SK-N-SH (cell line): ENCODE measurements at regions of chr15 and their contacts with region 1.

Region 1: DNA sequence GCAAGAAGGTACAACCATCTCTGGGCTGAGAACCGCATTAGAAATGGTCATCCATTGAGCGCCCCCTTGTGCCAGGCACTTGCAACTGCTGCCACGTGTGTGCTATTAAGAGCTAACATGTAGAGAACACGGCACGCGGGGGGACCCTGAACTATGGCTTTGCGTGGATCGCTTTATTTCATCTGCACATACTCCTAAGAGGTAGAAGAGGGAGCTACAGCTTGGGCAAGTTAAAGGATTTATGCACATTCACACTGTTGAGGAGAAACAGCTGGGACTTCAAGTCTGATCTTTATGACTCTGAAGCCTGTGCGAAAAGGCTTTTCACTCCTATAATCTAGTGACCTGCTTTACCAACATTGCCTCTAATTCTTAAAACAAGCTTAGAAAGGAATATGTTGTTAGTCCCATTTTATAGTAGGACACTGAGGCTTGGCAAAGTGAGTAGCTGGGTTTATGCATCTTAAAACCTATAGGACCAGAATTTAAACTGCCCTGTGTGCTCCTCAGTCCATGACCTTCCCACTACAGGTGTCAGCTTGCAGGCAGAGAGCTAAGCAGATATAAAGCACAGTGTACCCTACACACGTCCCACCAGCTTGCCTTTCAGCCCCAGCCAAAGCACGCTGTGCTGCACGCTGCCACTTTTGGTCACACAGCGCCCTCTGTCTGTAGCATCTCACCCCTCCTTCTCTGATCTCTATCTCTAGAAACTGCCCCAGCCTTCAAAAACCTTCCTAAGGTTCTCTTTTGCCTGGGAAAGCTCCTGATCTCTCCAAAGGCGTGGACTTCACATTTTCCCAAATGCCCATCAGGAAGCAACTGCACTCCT is 57.8 kb downstream of the STARD5 start:
- DNase-seq: peak; percentile 82
- H3K4me3 ChIP-seq: peak overlapping the region; percentile 9 to 51; a peak in 2 of 4 replicates
- H3K27ac ChIP-seq: no peak overlapping the region
- H3K4me1 ChIP-seq: peaks cover 5 to 11% of the 10 kb centered on the region in 2 experiments; a peak in 2 of 4 replicates
- H3K27me3 ChIP-seq: peaks cover 10% of the 10 kb centered on the region; the same call in 1 of the 2 replicates
- CTCF ChIP-seq: peak; percentile 84
- EP300 ChIP-seq: no peak
- RAD21 ChIP-seq: peak; percentile 95

Region 2: GRCh38 chr15:80523746-80524145 is 742.4 kb before region 1 on chr15:
- CTCF ChIA-PET with region 1: no interaction called
- POLR2A ChIA-PET with region 1: no interaction called
- DNase-seq: no peak
- H3K4me3 ChIP-seq: no peak overlapping the region
- H3K27ac ChIP-seq: no peak overlapping the region
- H3K4me1 ChIP-seq: no peaks in the 10 kb centered on the region
- H3K27me3 ChIP-seq: no peaks in the 10 kb centered on the region
- CTCF ChIP-seq: no peak
- EP300 ChIP-seq: no peak
- RAD21 ChIP-seq: no peak

Region 3: DNA sequence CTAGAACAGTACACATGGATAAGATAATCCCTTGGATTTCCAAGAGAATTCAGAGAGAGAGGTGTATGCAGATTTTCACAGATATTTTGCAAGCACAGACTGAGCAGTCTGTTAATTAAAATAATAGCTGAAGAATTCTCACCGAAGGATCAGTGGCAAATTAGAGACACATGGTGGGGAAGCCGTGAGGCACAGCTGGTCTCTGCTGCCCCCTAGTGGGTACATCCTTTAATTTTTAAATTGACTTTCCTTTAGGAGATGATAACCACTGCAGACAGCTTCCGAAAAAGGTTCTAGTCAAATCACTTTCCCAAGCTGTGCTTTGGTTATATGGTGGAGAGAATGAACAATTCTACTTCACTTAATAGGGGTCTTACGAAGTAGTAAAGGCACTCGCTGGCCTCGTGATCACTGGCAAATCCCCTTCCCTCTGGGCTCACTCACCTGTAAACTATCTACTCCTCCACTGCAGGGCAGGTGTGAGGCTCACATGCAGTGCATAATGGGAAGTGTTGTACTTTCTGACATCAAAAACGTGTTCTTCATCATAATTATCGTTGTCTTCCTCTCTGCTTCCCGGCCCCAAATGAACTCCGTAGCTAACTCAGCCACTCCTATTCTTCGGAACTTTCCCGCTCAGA is 296.0 kb before region 1 on chr15:
- CTCF ChIA-PET with region 1: interaction called, 14 read pairs
- POLR2A ChIA-PET with region 1: no interaction called
- DNase-seq: peak; percentile 70
- H3K4me3 ChIP-seq: no peak overlapping the region; a peak in 1 of 4 replicates
- H3K27ac ChIP-seq: no peak overlapping the region
- H3K4me1 ChIP-seq: peaks cover 0 to 7% of the 10 kb centered on the region in 2 experiments; a peak in 1 of 4 replicates
- H3K27me3 ChIP-seq: no peaks in the 10 kb centered on the region
- CTCF ChIP-seq: peak; percentile 87
- EP300 ChIP-seq: no peak
- RAD21 ChIP-seq: peak; percentile 95

Region 4: GRCh38 chr15:81126892-81127291 is 139.3 kb before region 1 on chr15:
- CTCF ChIA-PET with region 1: interaction called, 49 read pairs
- POLR2A ChIA-PET with region 1: no interaction called
- DNase-seq: no peak
- H3K4me3 ChIP-seq: no peak overlapping the region
- H3K27ac ChIP-seq: peak overlapping the region in 1 of 2 experiments; percentile 7; a peak in 1 of 4 replicates
- H3K4me1 ChIP-seq: no peaks in the 10 kb centered on the region
- H3K27me3 ChIP-seq: no peaks in the 10 kb centered on the region; the same call in 1 of the 2 replicates
- CTCF ChIP-seq: no peak
- EP300 ChIP-seq: no peak
- RAD21 ChIP-seq: no peak

Region 5: GRCh38 chr15:81170511-81170910 is 95.6 kb before region 1 on chr15:
- CTCF ChIA-PET with region 1: interaction called, 23 read pairs
- POLR2A ChIA-PET with region 1: no interaction called
- DNase-seq: no peak
- H3K4me3 ChIP-seq: no peak overlapping the region
- H3K27ac ChIP-seq: no peak overlapping the region
- H3K4me1 ChIP-seq: no peaks in the 10 kb centered on the region
- H3K27me3 ChIP-seq: no peaks in the 10 kb centered on the region
- CTCF ChIP-seq: no peak
- EP300 ChIP-seq: no peak
- RAD21 ChIP-seq: no peak

Region 6: DNA sequence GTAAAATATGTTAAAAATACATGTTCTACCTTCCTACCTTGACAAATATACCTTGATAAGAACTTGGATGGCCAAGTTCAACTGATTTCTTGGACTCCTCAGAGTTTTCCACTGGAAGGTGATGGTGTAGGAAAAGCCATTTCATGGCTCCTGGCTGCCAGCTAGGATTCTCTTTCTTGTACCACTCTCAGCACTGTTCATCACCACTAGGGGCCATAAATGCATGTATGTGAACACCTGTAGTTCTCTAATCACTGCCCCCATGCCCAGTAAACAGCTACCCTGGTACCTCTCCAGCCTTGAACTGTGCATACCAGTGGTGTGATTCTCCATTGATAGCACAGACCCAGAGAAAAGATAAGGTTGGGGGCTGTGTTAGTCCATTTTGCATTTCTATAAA is 31.3 kb before region 1 on chr15:
- CTCF ChIA-PET with region 1: interaction called, 12 read pairs
- POLR2A ChIA-PET with region 1: no interaction called
- DNase-seq: no peak
- H3K4me3 ChIP-seq: no peak overlapping the region
- H3K27ac ChIP-seq: no peak overlapping the region
- H3K4me1 ChIP-seq: no peaks in the 10 kb centered on the region
- H3K27me3 ChIP-seq: no peaks in the 10 kb centered on the region
- CTCF ChIP-seq: no peak
- EP300 ChIP-seq: no peak
- RAD21 ChIP-seq: no peak

Region 7: GRCh38 chr15:81357223-81357622 is 91.1 kb after region 1 on chr15:
- CTCF ChIA-PET with region 1: interaction called, 15 read pairs
- POLR2A ChIA-PET with region 1: no interaction called
- DNase-seq: no peak
- H3K4me3 ChIP-seq: no peak overlapping the region
- H3K27ac ChIP-seq: no peak overlapping the region
- H3K4me1 ChIP-seq: peaks cover 0 to 2% of the 10 kb centered on the region in 2 experiments; a peak in 1 of 4 replicates
- H3K27me3 ChIP-seq: no peaks in the 10 kb centered on the region
- CTCF ChIP-seq: no peak
- EP300 ChIP-seq: no peak
- RAD21 ChIP-seq: no peak

Region 8: DNA sequence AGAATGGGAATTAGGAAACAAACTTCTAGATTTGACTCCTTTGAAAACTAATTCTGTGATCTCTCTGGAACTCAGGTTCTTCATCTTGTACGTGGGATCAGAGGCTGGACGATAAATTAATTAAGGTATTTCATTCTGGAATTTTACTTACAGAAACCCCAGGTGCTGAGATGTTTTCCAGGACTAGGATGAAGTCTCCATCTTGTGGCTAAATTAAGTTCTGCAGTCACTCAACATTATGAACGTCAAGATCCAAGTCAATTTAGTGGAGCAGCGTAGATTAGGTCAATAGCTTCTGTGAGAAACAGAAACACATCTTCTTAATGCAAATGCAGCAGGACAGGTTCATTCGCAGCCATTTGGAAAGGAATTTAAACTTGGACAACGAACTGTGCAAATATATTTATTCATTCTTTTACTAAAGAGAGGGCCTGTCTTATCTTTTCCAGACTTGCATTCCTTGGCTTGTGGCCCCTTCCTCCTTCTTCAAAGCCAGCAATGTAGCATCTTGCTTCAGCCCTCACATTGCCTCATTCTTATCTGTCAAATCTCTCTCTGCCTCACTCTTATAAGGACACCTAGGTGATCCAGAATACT is 134.6 kb after region 1 on chr15:
- CTCF ChIA-PET with region 1: interaction called, 173 read pairs
- POLR2A ChIA-PET with region 1: no interaction called
- DNase-seq: peak; percentile 52
- H3K4me3 ChIP-seq: peak overlapping the region in 1 of 2 experiments; percentile 2; a peak in 1 of 4 replicates
- H3K27ac ChIP-seq: no peak overlapping the region
- H3K4me1 ChIP-seq: no peaks in the 10 kb centered on the region
- H3K27me3 ChIP-seq: no peaks in the 10 kb centered on the region
- CTCF ChIP-seq: peak; percentile 83
- EP300 ChIP-seq: no peak
- RAD21 ChIP-seq: peak; percentile 91